Colonic mucosa (tissue), 4 donors: ENCODE measurements at regions of chr1 and their contacts with region 1.

Region 1: DNA sequence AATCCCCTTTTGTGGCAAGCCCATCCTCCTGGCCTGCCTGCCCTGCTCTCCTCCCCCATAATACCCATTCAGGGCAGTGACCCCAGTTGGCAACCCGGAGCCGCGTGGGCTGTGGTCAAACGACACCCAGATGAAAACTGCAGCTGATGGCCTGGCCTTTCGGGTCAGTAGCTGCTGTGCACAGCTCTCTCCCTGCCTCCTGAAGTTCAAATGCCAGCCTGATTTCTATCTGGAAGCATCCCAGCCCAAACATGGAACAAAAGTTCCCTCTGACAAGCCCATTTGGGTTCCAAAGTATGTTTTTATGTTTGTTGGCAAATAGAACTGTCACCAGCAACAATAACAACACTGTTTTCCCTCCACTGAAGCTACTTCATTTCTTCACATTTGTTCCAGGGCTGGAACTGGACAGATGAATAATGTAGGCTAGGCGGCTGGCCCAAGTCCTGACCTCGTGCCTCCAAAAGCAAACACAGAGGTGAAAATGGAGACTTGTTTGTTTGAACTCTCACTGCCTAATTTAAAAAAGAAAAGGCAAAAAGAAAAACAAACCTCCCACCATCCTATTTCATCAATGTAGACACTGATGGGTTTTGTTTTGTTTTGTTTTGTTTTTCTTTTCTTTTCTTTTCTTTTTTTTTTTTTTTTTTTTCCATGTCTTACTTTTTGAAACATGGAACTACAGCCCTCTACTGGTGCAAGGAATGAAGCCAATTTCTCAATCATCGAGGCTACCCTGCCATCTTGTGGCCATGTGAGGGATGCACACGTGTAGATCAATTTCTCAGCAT is 179.0 kb downstream of the ADSS2 start:
- DNase-seq: peak; percentile 70
- H3K4me3 ChIP-seq: no peak overlapping the region
- H3K27ac ChIP-seq: no peak overlapping the region
- H3K4me1 ChIP-seq: no peaks in the 10 kb centered on the region
- H3K27me3 ChIP-seq: no peaks in the 10 kb centered on the region
- CTCF ChIP-seq: peak; percentile 96

Region 2: DNA sequence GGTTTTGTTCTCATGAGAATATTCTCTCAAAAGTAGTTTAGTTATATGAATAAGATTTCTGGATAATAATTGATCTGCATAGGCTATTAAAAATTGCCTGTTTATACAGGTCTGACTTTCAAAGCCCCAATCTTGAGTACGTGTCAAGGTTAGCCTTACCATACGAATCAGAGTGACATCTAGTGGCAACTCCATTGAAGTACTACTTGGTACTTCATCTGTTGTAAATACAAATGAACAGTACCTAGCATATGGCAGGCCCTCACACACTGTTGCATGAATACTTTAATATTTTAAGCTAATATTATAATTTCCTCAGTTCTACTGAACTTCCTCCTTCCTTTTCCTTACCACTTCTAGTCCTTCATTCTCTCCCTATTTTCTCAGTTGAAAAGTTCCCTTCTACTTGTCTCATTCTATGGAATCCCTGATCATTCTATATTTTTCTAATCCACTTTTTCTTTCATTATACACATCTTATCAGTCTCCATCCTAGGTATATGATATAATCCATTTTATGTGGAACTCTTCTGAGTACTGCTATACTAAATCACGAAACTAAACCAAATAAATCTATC is 523.9 kb before region 1 on chr1:
- intact Hi-C with region 1: loop called (anchors 10 kb)
- DNase-seq: no peak
- H3K4me3 ChIP-seq: no peak overlapping the region
- H3K27ac ChIP-seq: no peak overlapping the region
- H3K4me1 ChIP-seq: no peaks in the 10 kb centered on the region
- H3K27me3 ChIP-seq: no peaks in the 10 kb centered on the region
- CTCF ChIP-seq: peak; percentile 72

Region 3: DNA sequence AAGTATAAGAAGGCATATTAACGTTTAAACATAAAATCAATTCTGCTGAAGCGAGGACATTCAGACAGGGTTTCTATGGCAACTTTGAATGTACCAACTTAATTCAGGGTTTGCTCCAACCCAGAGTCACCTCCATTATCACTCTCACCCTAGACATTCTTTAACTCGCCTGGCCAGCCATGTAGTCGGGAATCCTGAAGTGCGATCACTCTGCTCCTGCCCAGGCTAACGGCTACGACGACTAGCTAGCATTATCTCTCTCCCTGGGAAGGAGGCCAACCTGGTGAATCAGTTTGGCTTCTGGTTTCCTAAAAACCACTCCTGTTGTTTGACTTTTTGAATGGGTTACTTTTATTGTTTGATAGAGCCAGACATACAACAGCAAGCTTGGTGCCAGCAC is 260.5 kb before region 1 on chr1:
- intact Hi-C with region 1: loop called (anchors 10 kb)
- DNase-seq: no peak
- H3K4me3 ChIP-seq: no peak overlapping the region
- H3K27ac ChIP-seq: no peak overlapping the region
- H3K4me1 ChIP-seq: no peaks in the 10 kb centered on the region
- H3K27me3 ChIP-seq: no peaks in the 10 kb centered on the region
- CTCF ChIP-seq: no peak